AG04450 (cell line): ENCODE measurements at regions of chr9 and their contacts with region 1.

Region 1: GRCh38 chr9:124285903-124286291 is 28.1 kb downstream of the NEK6 start:
- DNase-seq: peak; percentile 97
- H3K4me3 ChIP-seq: no peak overlapping the region; the same call in 1 of the 2 replicates
- H3K27ac ChIP-seq: peak overlapping the region; percentile 100
- H3K27me3 ChIP-seq: no peaks in the 10 kb centered on the region
- CTCF ChIP-seq: no peak

Region 2: GRCh38 chr9:124297553-124297905 is 11.6 kb after region 1 on chr9:
- CTCF ChIA-PET with region 1: no interaction called
- POLR2A ChIA-PET with region 1: interaction called, 23 read pairs
- DNase-seq: peak; percentile 90
- H3K4me3 ChIP-seq: no peak overlapping the region
- H3K27ac ChIP-seq: peak overlapping the region; percentile 93
- H3K27me3 ChIP-seq: no peaks in the 10 kb centered on the region
- CTCF ChIP-seq: no peak

Region 3: GRCh38 chr9:124306098-124306735 is 20.3 kb after region 1 on chr9:
- CTCF ChIA-PET with region 1: no interaction called
- POLR2A ChIA-PET with region 1: interaction called, 12 read pairs
- DNase-seq: peak; percentile 71
- H3K4me3 ChIP-seq: no peak overlapping the region
- H3K27ac ChIP-seq: peak overlapping the region; percentile 94
- H3K27me3 ChIP-seq: no peaks in the 10 kb centered on the region
- CTCF ChIP-seq: no peak